Activated CD4-positive, alpha-beta T cell treated with anti-CD3 and anti-CD28 coated beads for 36 hours (primary cell): ENCODE measurements at regions of chr4 and their contacts with region 1.

Region 1: DNA sequence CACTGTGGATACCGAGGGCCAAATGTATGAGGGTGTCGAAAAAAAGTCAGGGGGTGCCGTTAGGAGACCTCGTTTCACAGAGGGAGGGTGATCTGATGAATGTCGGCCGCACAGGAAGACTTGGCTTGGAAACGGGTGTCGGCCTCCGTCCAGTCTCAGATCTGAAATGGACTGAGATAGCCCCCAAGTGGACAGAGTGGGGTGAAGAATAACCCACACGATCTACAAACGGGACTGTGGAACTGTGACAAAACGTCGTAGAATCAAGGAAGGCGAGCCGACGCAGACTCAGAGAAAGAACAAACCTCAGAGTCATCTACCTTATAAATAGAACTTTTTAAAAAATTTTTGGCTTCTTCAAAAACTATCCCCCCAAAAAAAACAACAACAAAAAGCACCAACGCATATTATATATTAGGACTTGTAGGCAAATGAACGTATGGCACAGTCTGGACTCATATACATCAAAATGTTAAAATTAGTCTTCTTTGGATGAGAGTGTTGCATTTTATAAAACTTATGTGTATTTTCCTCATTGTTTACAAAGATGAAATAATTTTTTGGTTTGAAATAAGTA is 63.8 kb upstream of the IRF2 start:
- DNase-seq: peak; percentile 69
- ATAC-seq: peak; percentile 43
- H3K4me3 Mint-ChIP-seq: peak overlapping the region; percentile 92
- H3K27ac Mint-ChIP-seq: peak overlapping the region; percentile 95
- H3K4me1 Mint-ChIP-seq: peaks cover 45% of the 10 kb centered on the region
- H3K27me3 Mint-ChIP-seq: no peaks in the 10 kb centered on the region

Region 2: DNA sequence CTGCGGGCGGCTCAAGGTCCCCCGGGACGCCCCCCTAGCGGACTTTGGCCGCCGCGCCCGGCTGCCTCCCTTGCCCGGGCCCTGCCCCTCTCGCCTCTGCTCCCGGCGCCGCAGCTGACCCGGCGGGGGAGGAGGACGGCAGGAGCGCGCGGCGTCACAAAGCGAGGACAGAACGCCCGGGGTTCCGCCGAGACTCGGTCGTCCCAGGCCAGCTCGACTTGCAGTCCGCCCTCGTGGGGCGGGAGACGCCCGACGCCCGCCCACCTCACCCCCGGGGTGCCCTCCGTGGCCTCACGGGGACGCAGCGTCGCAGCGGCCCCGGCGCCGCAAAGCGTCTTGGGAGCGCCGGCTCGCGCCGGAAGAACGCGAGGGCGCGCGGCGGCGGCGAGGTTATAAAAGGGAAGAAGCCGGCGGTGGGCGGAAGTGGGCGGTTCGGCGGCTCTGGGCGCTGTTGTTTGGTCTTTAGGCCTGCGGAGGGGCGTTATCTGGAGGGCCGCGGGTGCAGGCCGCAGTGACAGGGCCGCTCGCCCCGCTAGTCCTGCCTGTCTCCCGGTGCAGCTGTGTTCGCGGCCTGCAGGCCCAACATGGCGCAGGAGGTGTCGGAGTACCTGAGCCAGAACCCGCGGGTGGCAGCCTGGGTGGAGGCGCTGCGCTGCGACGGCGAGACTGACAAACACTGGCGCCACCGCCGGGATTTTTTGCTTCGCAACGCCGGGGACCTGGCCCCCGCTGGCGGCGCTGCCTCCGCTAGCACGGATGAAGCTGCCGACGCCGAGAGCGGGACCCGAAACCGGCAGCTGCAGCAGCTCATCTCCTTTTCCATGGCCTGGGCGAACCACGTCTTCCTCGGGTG is 1093.7 kb before region 1 on chr4 and contains the start of gene CDKN2AIP:
- CTCF ChIA-PET with region 1: no interaction called
- POLR2A ChIA-PET with region 1: no interaction called
- intact Hi-C with region 1: loop called in 1 of 2 experiments (anchors 2 kb)
- DNase-seq: peak; percentile 95
- ATAC-seq: peak; percentile 87
- H3K4me3 Mint-ChIP-seq: peak within 1 kb of the TSS; percentile 97
- H3K27ac Mint-ChIP-seq: peak within 1 kb of the TSS; percentile 97
- H3K4me1 Mint-ChIP-seq: peaks cover 42% of the 10 kb centered on the region
- H3K27me3 Mint-ChIP-seq: no peaks in the 10 kb centered on the region
- total RNA-seq, gene CDKN2AIP: 19.4 to 22.8 TPM

Region 3: GRCh38 chr4:184287697-184288255 is 250.3 kb before region 1 on chr4:
- CTCF ChIA-PET with region 1: interaction called, 3 read pairs
- POLR2A ChIA-PET with region 1: no interaction called
- intact Hi-C with region 1: loop called (anchors 1 to 2 kb)
- DNase-seq: no peak
- ATAC-seq: no peak
- H3K4me3 Mint-ChIP-seq: no peak overlapping the region
- H3K27ac Mint-ChIP-seq: peak overlapping the region; percentile 40
- H3K4me1 Mint-ChIP-seq: peaks cover 56% of the 10 kb centered on the region
- H3K27me3 Mint-ChIP-seq: peaks cover 4% of the 10 kb centered on the region

Region 4: DNA sequence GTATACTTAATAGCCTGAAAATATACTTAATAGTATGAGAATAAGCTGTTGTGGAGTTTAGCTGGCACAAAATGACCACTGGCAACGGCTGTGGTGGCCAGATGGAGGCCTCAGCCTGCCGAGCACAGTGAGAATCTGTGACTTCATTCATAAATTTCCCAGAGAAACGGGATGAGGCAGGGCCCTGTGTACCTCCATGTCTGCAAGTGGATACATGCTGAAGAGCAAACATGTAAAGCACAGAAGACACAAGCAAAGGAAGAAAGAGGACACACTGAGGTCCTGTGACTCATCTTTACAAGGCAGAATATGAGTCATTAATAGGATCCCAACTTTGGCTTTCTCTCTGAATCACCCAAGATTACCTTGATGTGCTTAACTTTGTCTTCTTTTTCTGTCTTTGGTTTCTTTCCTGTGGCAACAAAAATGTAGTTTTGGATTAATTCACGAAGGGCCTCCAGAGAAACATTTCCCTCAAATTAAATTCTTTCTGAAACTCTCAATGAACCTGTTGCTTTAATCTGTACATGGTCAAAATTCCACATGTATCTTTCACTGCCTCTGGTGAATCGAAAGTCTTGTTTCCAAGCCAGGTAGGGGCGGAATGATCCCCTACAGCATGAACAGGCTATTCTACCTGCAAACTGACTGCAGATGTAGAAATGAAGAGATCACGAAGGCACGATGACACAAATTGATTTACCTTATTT is 120.2 kb before region 1 on chr4:
- CTCF ChIA-PET with region 1: interaction called, 3 read pairs
- POLR2A ChIA-PET with region 1: no interaction called
- intact Hi-C with region 1: loop called (anchors 1 to 2 kb)
- DNase-seq: peak; percentile 22
- ATAC-seq: peak; percentile 73
- H3K4me3 Mint-ChIP-seq: no peak overlapping the region
- H3K27ac Mint-ChIP-seq: peak overlapping the region; percentile 64
- H3K4me1 Mint-ChIP-seq: peaks cover 90% of the 10 kb centered on the region
- H3K27me3 Mint-ChIP-seq: no peaks in the 10 kb centered on the region

Region 5: GRCh38 chr4:184514121-184514988 is 23.8 kb before region 1 on chr4:
- CTCF ChIA-PET with region 1: interaction called, 28 read pairs
- POLR2A ChIA-PET with region 1: interaction called, 22 read pairs
- intact Hi-C with region 1: loop called (anchors 1 kb)
- DNase-seq: peak; percentile 89
- ATAC-seq: peak; percentile 91
- H3K4me3 Mint-ChIP-seq: peak overlapping the region; percentile 51
- H3K27ac Mint-ChIP-seq: peak overlapping the region; percentile 90
- H3K4me1 Mint-ChIP-seq: peaks cover 43% of the 10 kb centered on the region
- H3K27me3 Mint-ChIP-seq: peaks cover 1% of the 10 kb centered on the region

Region 6: GRCh38 chr4:184649026-184649970 is 111.2 kb after region 1 on chr4 and contains the starts of genes CASP3 and PRIMPOL:
- CTCF ChIA-PET with region 1: no interaction called
- POLR2A ChIA-PET with region 1: interaction called, 3 read pairs
- intact Hi-C with region 1: loop called (anchors 1 to 2 kb)
- DNase-seq: peak; percentile 98
- ATAC-seq: peak; percentile 88
- H3K4me3 Mint-ChIP-seq: peak within 1 kb of the TSS; percentile 94
- H3K27ac Mint-ChIP-seq: peak within 1 kb of the TSS; percentile 95
- H3K4me1 Mint-ChIP-seq: peaks cover 51% of the 10 kb centered on the region
- H3K27me3 Mint-ChIP-seq: no peaks in the 10 kb centered on the region
- total RNA-seq, gene CASP3: 44.3 to 65.7 TPM
- total RNA-seq, gene PRIMPOL: 20.4 to 24.3 TPM

Region 7: GRCh38 chr4:185142912-185143595 is 604.9 kb after region 1 on chr4 and contains the start of gene SLC25A4:
- CTCF ChIA-PET with region 1: no interaction called
- POLR2A ChIA-PET with region 1: no interaction called
- intact Hi-C with region 1: loop called in 1 of 2 experiments (anchors 5 kb)
- DNase-seq: peak; percentile 91
- ATAC-seq: peak; percentile 95
- H3K4me3 Mint-ChIP-seq: peak within 1 kb of the TSS; percentile 74
- H3K27ac Mint-ChIP-seq: peak within 1 kb of the TSS; percentile 70
- H3K4me1 Mint-ChIP-seq: peaks cover 10% of the 10 kb centered on the region
- H3K27me3 Mint-ChIP-seq: peaks cover 33% of the 10 kb centered on the region
- total RNA-seq, gene SLC25A4: 4.2 to 5.0 TPM